ENCODE measurements at regions of chr14 and their contacts with region 1.

Region 1: DNA sequence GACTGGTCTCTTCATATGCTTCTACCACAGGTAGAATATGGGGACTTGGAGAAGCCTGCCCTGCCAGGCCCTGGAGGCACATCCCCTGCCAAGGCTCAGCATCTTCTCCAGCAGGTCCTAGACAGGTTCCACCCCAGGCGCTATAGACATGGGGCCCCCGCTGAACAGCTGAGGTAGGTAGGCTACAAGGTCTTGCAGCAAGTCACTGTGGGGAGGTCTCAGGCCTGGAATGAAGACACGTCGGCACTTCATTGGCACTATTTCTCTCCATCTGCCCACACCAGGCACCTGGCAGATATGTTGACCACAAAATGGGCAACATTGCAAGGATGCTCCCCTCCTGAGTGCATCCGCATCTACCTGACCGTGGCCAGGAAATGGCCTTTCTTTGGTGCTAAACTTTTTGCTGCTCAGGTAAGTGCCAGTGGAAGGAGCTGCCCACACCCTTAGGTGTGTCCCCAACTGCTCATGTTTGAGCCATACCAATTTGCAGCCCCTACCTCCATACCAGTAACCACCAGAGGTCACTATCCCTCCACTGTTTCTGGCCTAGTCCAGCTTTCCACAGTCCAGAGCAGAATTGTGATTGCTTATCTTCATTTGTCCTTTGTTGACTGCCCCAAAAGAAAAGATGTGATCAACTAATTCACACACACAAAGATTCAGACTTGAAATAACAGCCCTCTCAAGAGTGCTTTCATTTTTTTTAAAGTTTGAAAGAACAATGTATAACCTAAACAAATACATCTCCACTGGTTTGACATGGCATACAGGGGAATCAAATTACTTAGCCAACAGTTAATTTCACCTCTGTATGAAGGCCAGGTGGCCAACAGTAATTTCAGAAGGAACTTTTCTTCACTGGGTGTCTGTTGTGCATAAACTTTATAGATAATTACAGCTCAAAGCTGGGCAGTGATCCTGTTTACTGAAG is 16.1 kb downstream of the PIGH start:
- DNase-seq: peak; percentile 76
- CTCF ChIP-seq: peak; percentile 64

Region 2: GRCh38 chr14:66900719-66901118 is 683.3 kb before region 1 on chr14:
- in situ Hi-C with region 1: no loop called
- DNase-seq: no peak
- CTCF ChIP-seq: no peak

Region 3: DNA sequence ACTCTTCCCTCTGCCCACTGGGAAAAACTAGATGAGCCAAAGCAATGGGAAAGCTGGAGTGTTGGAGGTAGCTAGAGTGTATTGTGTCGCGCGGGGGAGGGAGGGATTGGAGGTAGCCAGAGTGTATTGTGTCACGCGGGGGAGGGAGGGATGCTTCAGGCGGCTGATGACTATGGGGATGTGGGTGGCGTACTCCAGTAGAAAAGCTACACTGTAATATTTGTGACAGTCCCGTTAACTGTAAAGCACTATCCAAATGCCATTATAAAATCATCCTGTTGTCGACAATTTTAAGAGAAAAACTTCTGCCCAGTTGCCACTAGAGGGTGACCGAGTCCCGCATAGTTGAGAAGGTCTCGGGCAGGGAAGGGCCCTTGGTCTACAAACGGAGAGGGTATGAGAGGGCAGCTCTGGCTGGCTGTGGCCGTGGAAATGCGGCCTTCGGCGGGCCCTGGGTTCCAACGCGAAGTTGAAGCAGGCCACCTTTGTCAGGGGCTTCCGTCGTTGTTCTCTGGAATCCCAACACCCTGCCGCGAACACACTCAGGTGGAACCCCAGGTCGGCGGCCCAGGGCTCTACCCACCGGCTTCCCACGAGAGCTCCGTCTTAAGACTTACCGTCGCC is 156.9 kb before region 1 on chr14:
- in situ Hi-C with region 1: loop called (anchors 10 kb)
- DNase-seq: peak; percentile 89
- CTCF ChIP-seq: peak; percentile 60

Region 4: GRCh38 chr14:67502881-67503699 is 80.9 kb before region 1 on chr14:
- in situ Hi-C with region 1: no loop called
- DNase-seq: no peak
- CTCF ChIP-seq: no peak

Region 5: GRCh38 chr14:67513353-67514191 is 70.4 kb before region 1 on chr14:
- in situ Hi-C with region 1: no loop called
- DNase-seq: no peak
- CTCF ChIP-seq: no peak

Region 6: GRCh38 chr14:67846029-67846610 is 262.1 kb after region 1 on chr14:
- in situ Hi-C with region 1: no loop called
- DNase-seq: no peak
- CTCF ChIP-seq: no peak

Measured in GM13976 (cell line).